ENCODE measurements at regions of chr19 and their contacts with region 1.

Region 1: DNA sequence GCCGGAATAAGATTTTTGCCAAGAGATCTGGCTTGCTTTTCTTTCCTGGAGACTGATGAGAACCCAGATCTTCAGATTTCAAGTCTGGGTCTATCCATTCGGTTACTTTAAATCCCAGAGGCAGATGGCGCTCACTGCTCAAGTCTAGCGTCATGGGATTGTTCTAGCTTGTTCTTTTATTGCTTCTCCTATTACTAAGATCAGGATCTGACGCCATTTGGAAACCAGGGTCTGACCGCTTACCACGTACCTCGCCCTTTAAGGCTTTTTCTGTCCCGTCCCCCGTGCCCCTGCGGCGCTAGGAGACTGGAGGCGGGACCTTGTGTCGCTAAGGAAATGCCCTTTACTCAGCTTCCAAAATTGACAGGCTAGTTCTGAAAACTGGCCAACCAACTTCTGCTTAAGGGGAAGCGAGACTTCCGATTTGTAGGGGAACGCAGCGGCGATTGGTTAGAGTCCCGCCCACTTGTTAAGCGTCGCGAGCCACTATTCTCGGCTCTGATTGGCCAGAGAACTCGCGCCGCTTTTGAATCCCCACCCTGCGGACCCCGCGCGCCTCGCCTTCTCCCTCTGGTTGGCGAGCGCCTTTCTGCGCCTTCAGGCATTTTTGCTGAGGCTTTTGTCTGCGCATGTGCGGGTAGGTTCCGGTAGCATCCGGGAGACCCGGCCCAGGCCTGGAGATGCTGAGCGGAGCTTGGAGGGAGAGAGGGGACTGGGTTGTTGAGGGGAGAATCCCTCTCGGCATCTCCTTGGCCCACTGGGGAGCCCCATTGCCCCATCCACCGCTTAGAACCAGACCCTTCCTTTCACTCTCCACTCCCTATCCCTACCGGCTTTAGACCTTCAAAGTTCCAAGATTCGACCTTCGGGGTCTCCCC is 3.8 kb upstream of the C19orf84 start:
- DNase-seq: peak; percentile 99
- ATAC-seq: peak; percentile 91
- H3K4me3 ChIP-seq: peak overlapping the region; percentile 84
- H3K27ac ChIP-seq: peak overlapping the region; percentile 97
- H3K4me1 ChIP-seq: peaks cover 19% of the 10 kb centered on the region
- H3K27me3 ChIP-seq: no peaks in the 10 kb centered on the region
- CTCF ChIP-seq: peak; percentile 2 to 29 (median 28); a peak in 2 of 6 replicates
- EP300 ChIP-seq: peak in 1 of 2 experiments; percentile 66; a peak in 2 of 4 replicates
- POLR2A ChIP-seq: peak; percentile 83
- RAD21 ChIP-seq: peak; percentile 53

Region 2: DNA sequence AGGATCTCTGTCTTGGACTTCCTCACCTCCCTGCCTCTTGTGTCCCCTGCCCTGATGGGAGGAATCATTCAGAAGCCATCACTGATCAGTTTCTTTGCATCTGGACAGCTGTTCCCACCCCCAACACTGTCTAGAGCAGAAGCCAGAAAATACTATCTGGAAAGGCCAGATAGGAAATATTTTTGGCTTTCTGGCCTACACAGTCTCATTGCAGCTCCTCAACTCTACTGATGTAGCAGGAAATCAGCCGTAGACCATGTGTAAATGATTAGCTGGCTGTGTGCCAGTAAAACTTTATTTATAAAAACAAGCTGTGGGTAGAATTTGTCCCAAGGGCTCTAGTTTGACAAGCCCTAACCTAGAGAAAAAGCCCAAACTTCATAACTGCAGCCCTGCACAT is 246.5 kb before region 1 on chr19:
- CTCF ChIA-PET with region 1: no interaction called
- POLR2A ChIA-PET with region 1: no interaction called
- RAD21 ChIA-PET with region 1: no interaction called
- SMC1A ChIA-PET with region 1: no interaction called
- in situ Hi-C with region 1: no loop called
- intact Hi-C with region 1: no loop called
- DNase-seq: no peak
- ATAC-seq: no peak
- H3K4me3 ChIP-seq: no peak overlapping the region
- H3K27ac ChIP-seq: no peak overlapping the region
- H3K4me1 ChIP-seq: no peaks in the 10 kb centered on the region
- H3K27me3 ChIP-seq: peaks cover 0 to 3% of the 10 kb centered on the region in 2 experiments; a peak in 3 of 4 replicates
- CTCF ChIP-seq: no peak
- EP300 ChIP-seq: no peak
- POLR2A ChIP-seq: no peak
- RAD21 ChIP-seq: no peak

Region 3: DNA sequence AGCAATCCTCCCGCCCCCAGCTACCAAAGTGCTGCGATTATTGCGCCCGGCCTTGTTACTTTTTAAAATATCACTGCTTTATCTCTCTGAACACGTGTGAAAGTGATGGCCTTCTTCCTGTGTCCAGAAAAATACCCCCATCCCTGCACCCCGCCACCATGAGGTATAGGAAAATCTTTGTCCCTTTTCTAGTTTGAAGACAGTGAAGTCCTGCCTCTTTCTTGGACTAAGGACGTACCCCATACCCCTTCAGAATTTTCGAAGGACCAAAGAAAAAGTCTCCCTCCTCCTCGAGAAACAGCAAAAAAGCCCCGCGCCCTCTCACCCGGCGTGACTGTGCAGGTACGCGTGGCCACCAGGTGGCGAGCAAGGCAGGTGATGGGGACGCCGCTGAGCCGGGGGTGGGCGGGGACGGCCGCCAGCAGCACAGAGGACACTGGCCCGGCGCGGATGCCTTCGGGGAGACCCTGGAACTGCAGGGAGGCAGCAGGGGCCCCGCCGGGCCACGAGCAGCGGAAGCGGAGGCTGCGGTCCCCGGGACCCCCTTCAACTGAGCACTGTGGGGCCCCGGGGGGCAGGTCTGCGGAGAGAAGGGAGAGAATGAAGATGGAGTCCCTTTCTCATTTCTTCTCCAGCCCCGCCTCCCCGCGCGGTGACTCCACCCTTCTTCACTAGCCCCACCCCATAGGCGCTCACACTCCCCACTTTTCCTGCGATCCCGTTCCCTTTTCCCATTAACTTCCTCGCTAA is 55.5 kb before region 1 on chr19:
- CTCF ChIA-PET with region 1: interaction called, 43 read pairs
- POLR2A ChIA-PET with region 1: interaction called, 11 read pairs
- RAD21 ChIA-PET with region 1: interaction called, 32 read pairs
- SMC1A ChIA-PET with region 1: interaction called, 6 read pairs
- in situ Hi-C with region 1: no loop called
- intact Hi-C with region 1: loop called (anchors 1 kb)
- DNase-seq: peak; percentile 24
- ATAC-seq: peak; percentile 91
- H3K4me3 ChIP-seq: peak overlapping the region; percentile 60
- H3K27ac ChIP-seq: peak overlapping the region; percentile 22
- H3K4me1 ChIP-seq: peaks cover 5% of the 10 kb centered on the region
- H3K27me3 ChIP-seq: no peaks in the 10 kb centered on the region
- CTCF ChIP-seq: peak; percentile 83 to 93 (median 88)
- EP300 ChIP-seq: no peak
- POLR2A ChIP-seq: peak; percentile 26; the same call in 1 of the 2 replicates
- RAD21 ChIP-seq: peak; percentile 84

Region 4: DNA sequence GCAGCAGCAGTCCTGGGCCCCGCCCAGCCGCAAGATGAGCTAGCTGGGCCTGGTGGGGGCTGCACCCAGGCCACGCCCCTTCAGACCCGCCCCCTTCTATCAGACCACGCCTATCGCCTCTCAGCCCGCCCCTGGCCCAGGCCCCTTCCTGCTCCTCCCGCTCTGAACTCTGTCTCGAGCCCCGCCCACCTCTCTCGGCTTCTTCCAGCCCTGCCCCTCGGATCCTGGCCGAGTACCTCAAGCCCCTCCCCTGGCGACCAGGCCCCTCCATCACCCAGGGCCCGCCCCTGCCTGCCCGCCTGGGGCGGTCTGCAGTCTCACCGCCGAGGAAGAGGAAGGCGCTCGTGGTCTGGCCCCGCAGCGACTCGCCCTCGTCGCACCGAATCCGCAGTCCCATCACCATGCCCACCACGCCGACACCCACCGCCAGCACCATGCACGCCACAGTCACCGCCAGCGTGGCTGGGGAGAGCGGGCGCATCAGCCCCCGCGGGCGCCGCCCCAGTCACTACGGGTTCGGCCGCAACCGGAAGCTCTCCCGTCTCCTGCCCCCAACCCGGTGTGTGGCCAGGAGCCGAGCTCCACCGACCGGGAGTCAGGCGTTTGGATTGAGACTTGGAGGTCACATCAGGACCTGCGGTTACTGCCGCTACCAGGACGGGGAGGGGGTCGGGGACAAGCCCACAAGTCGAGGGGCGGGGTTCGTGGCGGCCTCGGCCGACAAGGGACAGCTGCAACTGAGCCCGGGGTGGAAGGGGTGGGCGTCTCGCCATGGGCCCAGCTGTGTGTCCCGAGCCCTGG is 26.4 kb before region 1 on chr19:
- CTCF ChIA-PET with region 1: interaction called, 14 read pairs
- POLR2A ChIA-PET with region 1: interaction called, 64 read pairs
- RAD21 ChIA-PET with region 1: interaction called, 34 read pairs
- SMC1A ChIA-PET with region 1: interaction called, 10 read pairs
- in situ Hi-C with region 1: no loop called
- intact Hi-C with region 1: loop called (anchors 1 kb)
- DNase-seq: peak; percentile 96
- ATAC-seq: peak; percentile 88
- H3K4me3 ChIP-seq: peak overlapping the region; percentile 82
- H3K27ac ChIP-seq: peak overlapping the region; percentile 56
- H3K4me1 ChIP-seq: peaks cover 24% of the 10 kb centered on the region
- H3K27me3 ChIP-seq: no peaks in the 10 kb centered on the region
- CTCF ChIP-seq: no peak
- EP300 ChIP-seq: no peak
- POLR2A ChIP-seq: peak; percentile 87
- RAD21 ChIP-seq: no peak

Region 5: GRCh38 chr19:51372649-51373504 is 21.3 kb before region 1 on chr19 and contains the start of gene NKG7:
- CTCF ChIA-PET with region 1: interaction called, 14 read pairs
- POLR2A ChIA-PET with region 1: interaction called, 64 read pairs
- RAD21 ChIA-PET with region 1: interaction called, 34 read pairs
- SMC1A ChIA-PET with region 1: interaction called, 10 read pairs
- in situ Hi-C with region 1: no loop called
- intact Hi-C with region 1: no loop called
- DNase-seq: peak; percentile 68
- ATAC-seq: peak; percentile 67
- H3K4me3 ChIP-seq: peak within 1 kb of the TSS; percentile 58; the same call in 1 of the 2 replicates
- H3K27ac ChIP-seq: peak within 1 kb of the TSS; percentile 87
- H3K4me1 ChIP-seq: peaks cover 45% of the 10 kb centered on the region
- H3K27me3 ChIP-seq: no peaks in the 10 kb centered on the region
- CTCF ChIP-seq: no peak
- EP300 ChIP-seq: no peak; a peak in 1 of 4 replicates
- POLR2A ChIP-seq: peak; percentile 61
- RAD21 ChIP-seq: 0 out of 2 replicates have a peak, but pooled peaks have one; percentile 3
- polyA plus RNA-seq, gene NKG7: 35.1 to 48.7 TPM

Region 6: DNA sequence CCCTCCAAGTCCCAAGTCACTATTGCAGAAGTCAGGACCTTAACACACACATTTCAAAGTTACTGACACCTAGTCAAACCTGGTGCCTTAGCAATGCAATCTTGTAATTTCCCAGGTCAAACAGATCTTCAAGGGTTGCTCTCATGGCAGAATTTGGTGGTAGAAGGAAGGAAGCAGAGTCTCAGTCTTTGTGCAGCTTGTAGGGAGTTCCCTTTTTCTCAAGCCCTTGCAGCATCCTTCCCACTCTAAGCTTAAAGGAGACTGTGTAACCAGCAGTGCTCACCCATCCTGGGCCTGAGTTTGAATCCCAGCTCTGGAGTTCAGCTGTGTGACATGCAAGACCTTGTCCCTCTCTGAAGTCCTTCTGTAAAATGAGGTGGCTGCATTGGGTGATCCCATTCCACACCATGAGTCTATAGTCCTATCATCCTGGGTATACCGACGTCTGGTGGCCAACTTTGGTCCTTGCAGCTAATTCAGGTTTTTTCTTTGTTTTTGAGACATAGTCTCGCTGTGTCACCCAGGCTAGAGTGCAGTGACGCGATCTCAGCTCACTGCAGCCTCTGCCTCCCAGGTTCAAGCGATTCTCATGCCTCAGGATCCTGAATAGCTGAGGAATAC is 13.4 kb after region 1 on chr19:
- CTCF ChIA-PET with region 1: interaction called, 49 read pairs
- POLR2A ChIA-PET with region 1: interaction called, 3 read pairs
- RAD21 ChIA-PET with region 1: interaction called, 4 read pairs
- SMC1A ChIA-PET with region 1: interaction called, 19 read pairs
- in situ Hi-C with region 1: no loop called
- intact Hi-C with region 1: no loop called
- DNase-seq: no peak
- ATAC-seq: peak; percentile 89
- H3K4me3 ChIP-seq: no peak overlapping the region
- H3K27ac ChIP-seq: no peak overlapping the region
- H3K4me1 ChIP-seq: peaks cover 14% of the 10 kb centered on the region
- H3K27me3 ChIP-seq: no peaks in the 10 kb centered on the region
- CTCF ChIP-seq: peak; percentile 63 to 79 (median 71)
- EP300 ChIP-seq: no peak
- POLR2A ChIP-seq: no peak
- RAD21 ChIP-seq: peak; percentile 66

Region 7: DNA sequence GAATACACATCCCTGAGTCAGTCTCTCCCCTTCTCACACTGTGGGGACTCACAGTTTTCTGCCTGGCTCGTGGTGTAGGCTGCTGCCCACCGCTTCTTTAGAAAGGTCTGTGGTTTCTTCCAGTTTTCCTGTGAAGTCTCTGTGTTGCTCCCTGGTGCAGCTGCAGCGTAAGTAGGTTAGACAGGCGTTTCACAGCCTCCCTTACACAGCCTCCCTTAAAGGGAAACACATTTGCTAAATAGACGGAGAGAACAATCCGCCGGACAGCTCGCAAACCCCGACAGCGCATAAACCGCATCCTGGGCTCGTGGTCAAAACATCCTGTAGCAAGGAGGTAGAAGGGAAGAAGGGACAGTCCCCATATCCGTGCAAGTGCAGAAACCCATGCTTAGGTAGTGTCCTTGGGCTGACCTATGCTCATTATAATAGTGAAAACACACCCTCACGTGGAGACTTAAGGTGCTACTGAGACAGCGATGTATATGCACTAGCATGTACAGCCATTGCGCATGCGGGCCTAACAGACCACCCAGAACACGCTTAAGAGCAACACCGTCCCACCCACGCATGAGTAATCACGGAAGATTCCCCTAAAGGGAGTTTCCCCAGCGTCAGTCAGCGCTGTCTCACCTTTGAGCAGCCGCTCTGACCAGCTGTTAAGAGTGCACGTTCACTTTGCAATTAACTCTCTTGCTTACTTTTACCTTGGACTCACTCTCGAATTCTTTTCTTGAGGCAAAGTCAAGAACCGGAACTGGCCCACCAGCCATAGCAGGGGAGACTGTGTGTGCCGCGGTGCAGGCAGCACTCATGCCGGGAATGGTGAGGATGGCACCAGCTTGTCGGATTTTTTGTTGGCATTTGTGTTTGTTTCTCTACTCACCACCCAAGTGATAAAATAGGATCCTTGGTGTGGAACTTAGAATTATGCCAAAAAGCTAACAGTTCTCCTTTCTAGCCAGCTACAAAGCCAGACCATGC is 47.5 kb after region 1 on chr19:
- CTCF ChIA-PET with region 1: interaction called, 41 read pairs
- POLR2A ChIA-PET with region 1: interaction called, 9 read pairs
- RAD21 ChIA-PET with region 1: interaction called, 19 read pairs
- SMC1A ChIA-PET with region 1: interaction called, 12 read pairs
- in situ Hi-C with region 1: no loop called
- intact Hi-C with region 1: no loop called
- DNase-seq: peak; percentile 91
- ATAC-seq: peak; percentile 94
- H3K4me3 ChIP-seq: peak overlapping the region; percentile 49; the same call in 1 of the 2 replicates
- H3K27ac ChIP-seq: no peak overlapping the region
- H3K4me1 ChIP-seq: peaks cover 27% of the 10 kb centered on the region
- H3K27me3 ChIP-seq: peaks cover 0 to 4% of the 10 kb centered on the region in 2 experiments; a peak in 2 of 4 replicates
- CTCF ChIP-seq: peak in 2 of 3 experiments; percentile 4 to 16; a peak in 2 of 6 replicates
- EP300 ChIP-seq: peak; percentile 56 to 73
- POLR2A ChIP-seq: no peak
- RAD21 ChIP-seq: no peak

Region 8: GRCh38 chr19:51462276-51462675 is 68.1 kb after region 1 on chr19:
- CTCF ChIA-PET with region 1: no interaction called
- POLR2A ChIA-PET with region 1: no interaction called
- RAD21 ChIA-PET with region 1: no interaction called
- SMC1A ChIA-PET with region 1: no interaction called
- in situ Hi-C with region 1: no loop called
- intact Hi-C with region 1: no loop called
- DNase-seq: no peak
- ATAC-seq: no peak
- H3K4me3 ChIP-seq: no peak overlapping the region
- H3K27ac ChIP-seq: no peak overlapping the region
- H3K4me1 ChIP-seq: no peaks in the 10 kb centered on the region
- H3K27me3 ChIP-seq: no peaks in the 10 kb centered on the region
- CTCF ChIP-seq: no peak
- EP300 ChIP-seq: no peak
- POLR2A ChIP-seq: no peak
- RAD21 ChIP-seq: no peak

Region 9: DNA sequence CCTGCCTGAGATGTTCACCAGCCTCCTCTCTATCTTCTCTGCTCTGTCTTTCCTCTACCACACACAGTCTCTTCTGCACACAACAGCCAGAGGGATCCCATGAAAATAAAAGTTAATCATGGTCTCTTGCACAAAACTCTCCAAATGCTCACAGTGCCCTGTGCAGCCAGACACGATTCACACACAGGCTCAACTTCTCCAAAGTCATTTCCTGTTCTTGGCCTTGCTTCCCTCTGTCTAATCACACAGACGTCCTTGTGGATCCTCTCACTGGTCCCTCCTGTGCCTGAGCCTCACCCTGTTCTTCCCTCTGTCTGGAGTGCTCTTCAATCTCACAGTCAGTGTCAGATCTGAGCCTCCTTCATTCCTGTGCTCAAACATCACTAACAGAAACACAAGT is 99.6 kb after region 1 on chr19:
- CTCF ChIA-PET with region 1: no interaction called
- POLR2A ChIA-PET with region 1: no interaction called
- RAD21 ChIA-PET with region 1: no interaction called
- SMC1A ChIA-PET with region 1: no interaction called
- in situ Hi-C with region 1: no loop called
- intact Hi-C with region 1: no loop called
- DNase-seq: no peak
- ATAC-seq: no peak
- H3K4me3 ChIP-seq: no peak overlapping the region
- H3K27ac ChIP-seq: no peak overlapping the region
- H3K4me1 ChIP-seq: no peaks in the 10 kb centered on the region
- H3K27me3 ChIP-seq: 0 out of 4 replicates have a peak, but pooled peaks cover 0 to 2% of the 10 kb centered on the region in 2 experiments
- CTCF ChIP-seq: no peak
- EP300 ChIP-seq: no peak
- POLR2A ChIP-seq: no peak
- RAD21 ChIP-seq: no peak

Region 10: DNA sequence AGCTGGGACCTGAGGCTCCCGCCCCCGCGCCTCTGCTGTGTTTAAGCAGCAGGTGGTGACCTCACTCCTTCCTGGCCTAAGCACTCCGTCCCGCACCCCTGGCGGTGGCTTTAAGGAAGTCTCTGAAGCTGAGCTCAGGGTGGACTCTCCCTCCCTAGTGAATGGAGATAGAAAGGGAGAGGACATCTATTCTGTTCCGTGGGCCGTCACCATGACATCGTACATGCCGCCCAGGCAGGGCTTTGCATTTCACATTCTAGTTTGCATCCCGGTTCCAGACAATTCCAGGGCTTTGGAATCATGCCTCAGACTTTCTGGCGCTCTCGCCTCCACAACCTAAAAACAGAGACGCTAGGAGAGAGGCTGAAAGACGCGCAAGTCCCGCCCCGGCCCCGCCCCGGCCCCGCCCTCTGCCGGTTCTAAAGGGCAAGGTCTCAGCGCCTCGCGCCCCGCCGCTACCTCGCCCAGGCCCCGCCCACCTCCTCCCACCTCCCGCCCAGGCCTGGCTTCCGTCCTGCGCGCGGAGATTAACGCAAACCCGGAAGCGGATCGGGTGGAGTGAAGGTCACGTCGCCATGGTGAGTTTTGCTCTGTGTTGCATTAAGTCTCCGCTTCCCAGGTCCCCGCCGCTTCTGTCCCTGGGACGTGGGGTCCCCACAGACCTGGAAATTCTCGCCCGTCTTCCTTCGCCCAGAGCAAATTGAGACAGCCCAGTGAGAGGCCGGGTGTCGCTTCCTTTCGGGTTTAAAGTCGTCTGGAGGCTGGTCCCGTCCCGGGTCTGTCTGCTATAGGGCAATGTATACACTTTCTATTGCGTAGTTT is 1133.1 kb after region 1 on chr19 and contains the start of gene ZNF808:
- CTCF ChIA-PET with region 1: no interaction called
- POLR2A ChIA-PET with region 1: no interaction called
- RAD21 ChIA-PET with region 1: no interaction called
- SMC1A ChIA-PET with region 1: no interaction called
- in situ Hi-C with region 1: loop called (anchors 25 kb)
- intact Hi-C with region 1: no loop called
- DNase-seq: peak; percentile 68
- ATAC-seq: peak; percentile 95
- H3K4me3 ChIP-seq: peak within 1 kb of the TSS; percentile 79
- H3K27ac ChIP-seq: peak within 1 kb of the TSS; percentile 92
- H3K4me1 ChIP-seq: no peaks in the 10 kb centered on the region; the same call in 1 of the 2 replicates
- H3K27me3 ChIP-seq: no peaks in the 10 kb centered on the region
- CTCF ChIP-seq: peak; percentile 57 to 77 (median 59)
- EP300 ChIP-seq: no peak
- POLR2A ChIP-seq: peak; percentile 74
- RAD21 ChIP-seq: peak; percentile 63
- polyA plus RNA-seq, gene ZNF808: 2.1 to 3.7 TPM